Gastrocnemius medialis (tissue), 4 donors: ENCODE measurements at regions of chr17 and their contacts with region 1.

Region 1: GRCh38 chr17:7136266-7136877 is 21.8 kb upstream of the ASGR2 start:
- DNase-seq: peak; percentile 8 to 38
- ATAC-seq: no peak
- H3K4me3 ChIP-seq: no peak overlapping the region
- H3K27ac ChIP-seq: no peak overlapping the region
- H3K4me1 ChIP-seq: no peaks in the 10 kb centered on the region
- H3K27me3 ChIP-seq: peaks cover 15% of the 10 kb centered on the region in 3 donors
- CTCF ChIP-seq: peak; percentile 74 to 88 (median 84)
- POLR2A ChIP-seq: no peak

Region 2: GRCh38 chr17:7045909-7046724 is 90.3 kb before region 1 on chr17:
- in situ Hi-C with region 1: loop called (anchors 5 kb)
- intact Hi-C with region 1: loop called (anchors 2 kb)
- DNase-seq: no peak
- ATAC-seq: peak; percentile 35 to 57
- H3K4me3 ChIP-seq: peak overlapping the region; percentile 14 to 50 (median 30)
- H3K27ac ChIP-seq: peak overlapping the region in 1 of 4 donors; percentile 44
- H3K4me1 ChIP-seq: peaks cover 10 to 12% of the 10 kb centered on the region in 2 donors
- H3K27me3 ChIP-seq: peaks cover 21 to 30% (median 29%) of the 10 kb centered on the region in 3 donors
- CTCF ChIP-seq: peak; percentile 50 to 76 (median 74)
- POLR2A ChIP-seq: no peak

Region 3: GRCh38 chr17:7056386-7056785 is 80.0 kb before region 1 on chr17:
- in situ Hi-C with region 1: loop called (anchors 5 kb)
- intact Hi-C with region 1: loop called (anchors 1 kb)
- DNase-seq: no peak
- ATAC-seq: no peak
- H3K4me3 ChIP-seq: no peak overlapping the region
- H3K27ac ChIP-seq: no peak overlapping the region
- H3K4me1 ChIP-seq: no peaks in the 10 kb centered on the region
- H3K27me3 ChIP-seq: peaks cover 0 to 3% (median 0%) of the 10 kb centered on the region in 3 donors
- CTCF ChIP-seq: no peak
- POLR2A ChIP-seq: no peak

Region 4: GRCh38 chr17:7214300-7215135 is 78.1 kb after region 1 on chr17:
- in situ Hi-C with region 1: no loop called
- intact Hi-C with region 1: no loop called
- DNase-seq: peak; percentile 91 to 92
- ATAC-seq: peak; percentile 83 to 88
- H3K4me3 ChIP-seq: peak overlapping the region; percentile 61 to 80 (median 68)
- H3K27ac ChIP-seq: peak overlapping the region; percentile 62 to 76 (median 64)
- H3K4me1 ChIP-seq: peaks cover 39 to 43% of the 10 kb centered on the region in 2 donors
- H3K27me3 ChIP-seq: peaks cover 8 to 20% (median 13%) of the 10 kb centered on the region in 3 donors
- CTCF ChIP-seq: peak in 4 of 5 experiments; percentile 40 to 59 (median 44)
- POLR2A ChIP-seq: no peak